OCI-LY7 (cell line): ENCODE measurements at regions of chr12 and their contacts with region 1.

Region 1: DNA sequence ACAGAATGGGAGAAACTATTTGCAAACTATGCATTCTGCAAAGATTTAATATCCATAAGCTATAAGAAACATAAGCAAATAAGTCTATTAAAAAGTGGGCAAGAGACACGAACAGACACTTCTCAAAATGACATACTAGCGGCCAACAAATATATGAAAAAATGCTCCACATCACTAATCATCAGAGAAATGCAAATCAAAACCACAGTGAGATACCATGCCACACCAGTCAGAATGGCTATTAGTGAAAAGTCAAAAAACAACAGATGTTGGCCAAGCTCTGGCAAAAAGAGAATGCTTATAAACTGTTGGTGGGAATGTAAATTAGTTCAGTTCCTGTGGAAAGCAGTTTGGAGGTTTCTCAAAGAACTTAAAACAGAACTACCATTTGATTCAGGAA is 121.3 kb downstream of the KCNMB4 start:
- DNase-seq: peak; percentile 51
- H3K4me3 ChIP-seq: peak overlapping the region; percentile 9
- H3K27ac ChIP-seq: peak overlapping the region; percentile 63
- H3K4me1 ChIP-seq: peaks cover 44% of the 10 kb centered on the region
- CTCF ChIP-seq: no peak

Region 2: GRCh38 chr12:69000540-69001243 is 1486.7 kb before region 1 on chr12:
- CTCF ChIA-PET with region 1: no interaction called
- POLR2A ChIA-PET with region 1: no interaction called
- intact Hi-C with region 1: no loop called
- DNase-seq: no peak
- H3K4me3 ChIP-seq: no peak overlapping the region
- H3K27ac ChIP-seq: no peak overlapping the region
- H3K4me1 ChIP-seq: no peaks in the 10 kb centered on the region
- CTCF ChIP-seq: no peak

Region 3: DNA sequence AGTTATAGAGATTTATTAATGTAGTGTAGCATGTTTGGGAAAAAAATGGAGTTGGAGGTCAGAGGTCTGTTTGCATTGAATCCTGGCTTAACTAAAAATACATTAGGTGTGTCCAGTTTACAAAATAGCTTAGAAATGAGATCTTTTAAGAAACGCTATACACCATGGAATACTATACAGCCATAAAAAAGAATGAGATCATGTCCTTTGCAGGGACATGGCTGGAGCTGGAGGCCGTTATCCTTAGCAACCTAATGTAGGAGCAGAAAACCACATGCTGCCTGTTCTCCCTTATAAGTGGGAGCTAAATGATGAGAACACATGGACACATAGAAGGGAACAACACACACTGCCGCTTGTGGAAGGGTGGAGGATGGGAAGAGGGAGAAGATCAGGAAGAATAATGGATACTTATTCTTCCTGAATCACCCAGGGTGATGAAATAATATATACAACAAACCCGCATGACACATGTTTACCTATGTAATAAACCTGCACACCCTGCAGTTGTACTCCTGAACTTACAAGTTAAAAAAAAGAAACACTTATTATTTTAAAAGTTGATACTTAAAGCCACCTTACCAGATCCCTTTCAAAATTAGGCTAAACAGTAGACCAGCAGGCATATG is 676.5 kb before region 1 on chr12:
- CTCF ChIA-PET with region 1: no interaction called
- POLR2A ChIA-PET with region 1: no interaction called
- intact Hi-C with region 1: no loop called
- DNase-seq: no peak
- H3K4me3 ChIP-seq: no peak overlapping the region
- H3K27ac ChIP-seq: no peak overlapping the region
- H3K4me1 ChIP-seq: no peaks in the 10 kb centered on the region
- CTCF ChIP-seq: no peak

Region 4: DNA sequence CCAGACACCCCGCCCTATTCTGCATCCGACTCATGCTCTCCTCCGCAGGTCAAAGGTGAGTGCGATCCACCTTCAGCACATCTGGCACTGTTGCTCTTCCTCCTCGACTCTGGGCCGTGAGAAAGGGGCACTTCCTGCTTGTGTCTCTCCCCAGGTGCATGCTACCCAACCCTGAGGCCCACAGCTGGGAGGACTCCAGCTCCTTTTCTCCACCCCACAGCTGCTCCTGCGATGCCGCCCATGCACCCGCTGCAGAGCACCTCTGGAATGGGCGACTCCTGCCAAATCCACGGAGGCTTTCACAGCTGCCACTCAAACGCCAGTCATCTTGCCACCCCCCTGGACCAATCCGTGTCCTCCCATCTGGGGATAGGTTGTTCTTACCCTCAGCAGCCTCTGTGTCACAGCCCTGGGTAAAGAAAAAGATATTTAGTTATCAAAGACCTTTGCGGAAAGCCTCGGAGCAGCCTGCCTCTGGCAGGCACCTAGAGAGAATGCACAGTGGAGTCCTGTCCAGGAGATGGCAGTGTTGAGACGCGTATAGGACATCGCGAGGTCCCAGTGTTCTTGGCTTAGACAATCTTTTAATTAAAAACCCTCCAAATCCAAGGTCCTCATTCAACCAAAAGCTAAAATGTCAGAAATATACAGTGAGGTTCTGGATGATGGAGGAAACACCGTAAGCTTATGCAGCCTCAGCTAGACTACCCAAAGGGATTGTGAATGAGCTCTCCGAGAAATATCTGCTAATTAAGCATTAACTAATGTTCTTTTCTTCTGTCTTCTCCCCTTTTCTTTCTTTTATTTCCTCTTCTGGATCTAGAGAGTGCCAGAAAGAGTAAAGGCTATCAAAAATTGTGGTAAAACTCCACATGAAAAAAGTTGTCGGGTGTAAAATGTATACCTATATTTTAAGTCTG is 608.1 kb before region 1 on chr12:
- CTCF ChIA-PET with region 1: interaction called, 3 read pairs
- POLR2A ChIA-PET with region 1: interaction called, 3 read pairs
- intact Hi-C with region 1: loop called (anchors 1 kb)
- DNase-seq: peak; percentile 85
- H3K4me3 ChIP-seq: peak overlapping the region; percentile 21
- H3K27ac ChIP-seq: no peak overlapping the region
- H3K4me1 ChIP-seq: peaks cover 7% of the 10 kb centered on the region
- CTCF ChIP-seq: peak; percentile 98

Region 5: DNA sequence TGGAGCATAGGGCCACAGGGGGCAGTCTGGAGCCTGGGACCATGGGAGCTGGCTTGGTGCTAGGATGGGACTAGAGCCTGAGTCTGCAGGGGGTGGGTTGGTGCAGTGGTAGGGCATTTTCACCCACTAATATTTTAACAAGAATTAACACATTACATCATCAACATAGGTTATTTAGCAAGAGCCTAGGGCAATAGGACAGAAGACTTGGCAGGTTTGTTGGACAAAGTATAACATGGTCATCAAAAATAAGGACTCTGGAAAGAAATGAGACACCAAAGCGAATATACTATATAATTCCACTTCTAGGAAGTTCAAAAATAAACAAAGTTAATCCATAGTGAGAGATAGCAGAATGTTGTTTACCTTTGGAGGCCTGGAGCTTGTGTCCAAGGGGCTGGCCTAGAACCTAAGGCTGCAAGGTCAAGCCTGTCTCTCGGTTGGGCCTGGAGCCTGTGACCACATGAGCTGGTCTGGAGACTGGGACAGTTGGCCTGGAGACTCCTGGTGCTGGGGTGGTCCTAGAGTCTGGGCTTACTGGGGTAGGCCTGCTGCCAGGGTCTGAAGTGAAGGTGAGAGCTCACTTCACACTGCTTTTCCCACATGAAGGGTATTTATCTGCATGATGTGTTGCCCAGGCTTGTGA is 272.3 kb before region 1 on chr12:
- CTCF ChIA-PET with region 1: no interaction called
- POLR2A ChIA-PET with region 1: no interaction called
- intact Hi-C with region 1: loop called (anchors 10 kb)
- DNase-seq: no peak
- H3K4me3 ChIP-seq: no peak overlapping the region
- H3K27ac ChIP-seq: no peak overlapping the region
- H3K4me1 ChIP-seq: no peaks in the 10 kb centered on the region
- CTCF ChIP-seq: no peak

Region 6: GRCh38 chr12:70277973-70278372 is 209.5 kb before region 1 on chr12:
- CTCF ChIA-PET with region 1: no interaction called
- POLR2A ChIA-PET with region 1: no interaction called
- intact Hi-C with region 1: no loop called
- DNase-seq: no peak
- H3K4me3 ChIP-seq: no peak overlapping the region
- H3K27ac ChIP-seq: no peak overlapping the region
- H3K4me1 ChIP-seq: no peaks in the 10 kb centered on the region
- CTCF ChIP-seq: no peak